ENCODE measurements at regions of chr17 and their contacts with region 1.

Region 1: DNA sequence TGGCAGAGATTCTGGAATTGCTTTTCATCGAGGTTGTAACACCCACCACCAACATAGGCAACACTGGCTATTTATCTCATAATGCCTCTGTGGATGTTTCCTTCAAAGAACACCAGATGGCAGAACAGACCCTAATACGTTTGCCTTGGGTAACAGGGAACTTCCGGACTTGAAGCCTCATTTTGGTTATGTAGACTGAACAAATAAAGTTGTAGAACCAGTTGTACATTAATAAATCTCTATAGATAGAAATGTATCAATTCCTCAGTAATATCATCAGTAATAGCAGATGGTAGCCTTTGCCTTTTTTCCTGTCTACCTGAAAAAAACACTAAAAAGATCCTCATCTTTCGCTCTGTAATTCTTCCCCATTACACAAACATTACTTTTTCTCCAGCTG is 25.9 kb upstream of the APOH start:
- DNase-seq: peak; percentile 64 to 74 (median 70)
- H3K4me3 ChIP-seq: no peak overlapping the region
- H3K4me3 Mint-ChIP-seq: peak overlapping the region; percentile 25 to 81 (median 66)
- H3K27ac ChIP-seq: peak overlapping the region; percentile 10
- H3K27ac Mint-ChIP-seq: peak overlapping the region; percentile 19 to 95 (median 81)
- H3K4me1 ChIP-seq: peaks cover 26% of the 10 kb centered on the region
- H3K4me1 Mint-ChIP-seq: peaks cover 16 to 25% (median 20%) of the 10 kb centered on the region in 4 donors
- H3K27me3 ChIP-seq: no peaks in the 10 kb centered on the region
- H3K27me3 Mint-ChIP-seq: no peaks in the 10 kb centered on the region

Region 2: DNA sequence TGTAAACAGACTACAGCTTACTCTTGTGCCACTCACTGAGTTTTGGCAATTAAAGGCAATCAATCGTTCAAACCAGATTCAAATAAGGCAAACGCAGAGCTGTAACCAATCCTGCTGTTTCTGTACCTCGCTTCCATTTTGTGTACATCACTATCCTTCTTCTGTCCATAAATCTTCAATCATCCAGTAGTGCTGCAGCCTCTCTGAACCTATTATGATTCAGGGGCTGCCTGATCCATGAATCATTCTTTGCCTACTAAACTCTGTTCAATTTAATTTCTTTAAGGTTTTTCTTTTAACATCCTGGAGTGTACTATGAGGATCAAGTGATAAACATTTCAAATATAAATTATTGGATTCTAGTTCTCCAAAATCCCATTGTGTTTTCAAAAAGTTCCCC is 157.1 kb before region 1 on chr17:
- CTCF ChIA-PET with region 1: no interaction called
- POLR2A ChIA-PET with region 1: no interaction called
- intact Hi-C with region 1: no loop called
- DNase-seq: no peak
- H3K4me3 ChIP-seq: no peak overlapping the region
- H3K4me3 Mint-ChIP-seq: no peak overlapping the region
- H3K27ac ChIP-seq: no peak overlapping the region
- H3K27ac Mint-ChIP-seq: no peak overlapping the region
- H3K4me1 ChIP-seq: no peaks in the 10 kb centered on the region
- H3K4me1 Mint-ChIP-seq: no peaks in the 10 kb centered on the region
- H3K27me3 ChIP-seq: no peaks in the 10 kb centered on the region
- H3K27me3 Mint-ChIP-seq: no peaks in the 10 kb centered on the region

Region 3: DNA sequence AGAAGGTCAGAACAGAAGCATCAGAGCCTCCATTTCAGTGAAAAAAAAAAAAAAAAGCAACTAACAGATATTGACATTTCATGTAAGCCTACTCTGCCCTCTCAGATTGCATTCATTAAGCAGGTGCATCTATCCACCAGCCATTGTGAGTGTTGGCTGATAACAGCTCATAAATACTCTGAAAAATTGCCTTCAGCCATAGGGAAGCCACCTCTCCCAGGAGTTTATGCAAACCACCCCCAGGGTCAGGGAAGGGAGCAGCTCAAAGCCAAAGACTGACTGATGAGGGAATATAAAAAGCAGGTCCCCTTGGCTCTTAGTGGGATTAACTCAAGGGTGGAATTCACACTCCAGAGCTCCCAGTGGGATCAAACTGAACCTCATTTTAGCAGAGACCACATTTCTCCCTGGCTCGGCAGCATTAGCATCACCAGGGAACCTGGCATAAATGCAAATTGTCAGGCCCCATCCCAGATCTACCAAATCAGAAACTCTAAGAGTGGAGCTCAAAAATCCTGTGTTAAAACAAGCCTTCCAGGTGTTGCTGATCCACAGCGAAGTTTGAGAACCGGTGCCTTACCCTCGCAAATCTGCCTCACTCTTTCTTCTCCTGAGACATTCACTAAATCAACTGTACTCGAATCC is 40.1 kb before region 1 on chr17:
- CTCF ChIA-PET with region 1: no interaction called
- POLR2A ChIA-PET with region 1: no interaction called
- intact Hi-C with region 1: no loop called
- DNase-seq: no peak
- H3K4me3 ChIP-seq: no peak overlapping the region
- H3K4me3 Mint-ChIP-seq: no peak overlapping the region
- H3K27ac ChIP-seq: no peak overlapping the region
- H3K27ac Mint-ChIP-seq: no peak overlapping the region
- H3K4me1 ChIP-seq: no peaks in the 10 kb centered on the region
- H3K4me1 Mint-ChIP-seq: no peaks in the 10 kb centered on the region
- H3K27me3 ChIP-seq: peaks cover 4% of the 10 kb centered on the region
- H3K27me3 Mint-ChIP-seq: peaks cover 0 to 4% of the 10 kb centered on the region in 2 donors

Region 4: GRCh38 chr17:66287911-66288310 is 32.8 kb after region 1 on chr17:
- CTCF ChIA-PET with region 1: interaction called, 10 read pairs
- POLR2A ChIA-PET with region 1: no interaction called
- intact Hi-C with region 1: no loop called
- DNase-seq: no peak
- H3K4me3 ChIP-seq: no peak overlapping the region
- H3K4me3 Mint-ChIP-seq: peak overlapping the region in 3 of 8 donors; percentile 17 to 30 (median 22)
- H3K27ac ChIP-seq: no peak overlapping the region
- H3K27ac Mint-ChIP-seq: peak overlapping the region in 5 of 7 donors; percentile 23 to 88 (median 41)
- H3K4me1 ChIP-seq: peaks cover 27% of the 10 kb centered on the region
- H3K4me1 Mint-ChIP-seq: peaks cover 26 to 53% (median 39%) of the 10 kb centered on the region in 4 donors
- H3K27me3 ChIP-seq: no peaks in the 10 kb centered on the region
- H3K27me3 Mint-ChIP-seq: no peaks in the 10 kb centered on the region

Region 5: GRCh38 chr17:66426397-66427033 is 171.4 kb after region 1 on chr17:
- CTCF ChIA-PET with region 1: interaction called, 12 read pairs
- POLR2A ChIA-PET with region 1: interaction called, 4 read pairs
- intact Hi-C with region 1: loop called (anchors 1 kb)
- DNase-seq: peak; percentile 59 to 68 (median 62)
- H3K4me3 ChIP-seq: no peak overlapping the region
- H3K4me3 Mint-ChIP-seq: peak overlapping the region; percentile 45 to 86 (median 64)
- H3K27ac ChIP-seq: no peak overlapping the region
- H3K27ac Mint-ChIP-seq: peak overlapping the region; percentile 45 to 91 (median 87)
- H3K4me1 ChIP-seq: peaks cover 17% of the 10 kb centered on the region
- H3K4me1 Mint-ChIP-seq: peaks cover 38 to 83% (median 60%) of the 10 kb centered on the region in 4 donors
- H3K27me3 ChIP-seq: no peaks in the 10 kb centered on the region
- H3K27me3 Mint-ChIP-seq: no peaks in the 10 kb centered on the region

Region 6: GRCh38 chr17:66481271-66481670 is 226.2 kb after region 1 on chr17:
- CTCF ChIA-PET with region 1: no interaction called
- POLR2A ChIA-PET with region 1: no interaction called
- intact Hi-C with region 1: no loop called
- DNase-seq: no peak
- H3K4me3 ChIP-seq: no peak overlapping the region
- H3K4me3 Mint-ChIP-seq: no peak overlapping the region
- H3K27ac ChIP-seq: no peak overlapping the region
- H3K27ac Mint-ChIP-seq: no peak overlapping the region
- H3K4me1 ChIP-seq: no peaks in the 10 kb centered on the region
- H3K4me1 Mint-ChIP-seq: peaks cover 20 to 31% (median 30%) of the 10 kb centered on the region in 4 donors
- H3K27me3 ChIP-seq: no peaks in the 10 kb centered on the region
- H3K27me3 Mint-ChIP-seq: no peaks in the 10 kb centered on the region

Region 7: DNA sequence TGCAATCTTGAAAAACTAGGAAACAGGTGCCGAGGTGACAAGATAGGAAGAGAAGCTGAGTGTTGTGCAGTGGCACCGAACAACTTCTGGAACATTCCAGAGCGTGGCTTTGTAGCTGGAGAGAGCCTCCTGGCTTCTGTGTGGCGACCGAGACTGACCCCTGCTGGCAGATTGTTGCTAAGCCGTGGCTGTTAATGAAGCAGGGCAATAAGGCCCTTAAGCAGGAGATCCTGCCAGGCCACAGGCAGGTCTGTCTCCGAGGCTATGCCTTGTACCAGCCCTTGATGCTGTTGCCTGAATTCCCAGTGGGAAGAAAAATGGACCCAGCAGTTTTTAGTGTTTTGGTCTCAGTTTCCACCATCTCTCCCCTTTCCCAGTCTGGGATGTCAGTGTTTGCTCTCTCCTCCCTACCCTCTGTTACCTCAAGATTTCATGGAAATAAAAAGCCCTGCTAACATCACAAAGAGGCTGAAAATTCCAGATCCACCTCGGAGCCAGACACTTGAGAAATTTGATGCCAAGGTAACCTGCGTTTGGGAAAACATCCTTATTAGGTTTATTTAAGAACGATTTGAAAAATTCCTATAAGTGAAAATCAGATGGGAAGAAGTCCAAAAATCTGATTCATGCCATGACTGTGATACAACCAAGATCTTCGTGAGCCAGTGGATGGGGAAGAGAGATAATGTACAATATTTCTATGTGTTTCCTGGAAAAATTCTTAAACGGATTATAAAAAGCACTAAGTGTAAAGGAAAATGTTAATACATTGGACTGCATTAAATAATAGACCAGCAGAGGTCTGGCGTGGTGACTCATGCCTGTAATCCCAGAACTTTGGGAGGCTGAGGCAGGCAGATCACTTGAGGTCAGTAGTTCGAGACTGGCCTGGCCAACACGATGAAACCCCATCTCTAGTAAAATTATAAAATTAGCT is 312.4 kb after region 1 on chr17:
- CTCF ChIA-PET with region 1: interaction called, 40 read pairs
- POLR2A ChIA-PET with region 1: interaction called, 4 read pairs
- intact Hi-C with region 1: loop called (anchors 1 kb)
- DNase-seq: peak; percentile 60 to 77 (median 62)
- H3K4me3 ChIP-seq: no peak overlapping the region
- H3K4me3 Mint-ChIP-seq: peak overlapping the region in 1 of 8 donors; percentile 21
- H3K27ac ChIP-seq: no peak overlapping the region
- H3K27ac Mint-ChIP-seq: peak overlapping the region in 3 of 7 donors; percentile 8 to 68 (median 9)
- H3K4me1 ChIP-seq: peaks cover 8% of the 10 kb centered on the region
- H3K4me1 Mint-ChIP-seq: peaks cover 21 to 32% (median 26%) of the 10 kb centered on the region in 4 donors
- H3K27me3 ChIP-seq: no peaks in the 10 kb centered on the region
- H3K27me3 Mint-ChIP-seq: no peaks in the 10 kb centered on the region

Region 8: DNA sequence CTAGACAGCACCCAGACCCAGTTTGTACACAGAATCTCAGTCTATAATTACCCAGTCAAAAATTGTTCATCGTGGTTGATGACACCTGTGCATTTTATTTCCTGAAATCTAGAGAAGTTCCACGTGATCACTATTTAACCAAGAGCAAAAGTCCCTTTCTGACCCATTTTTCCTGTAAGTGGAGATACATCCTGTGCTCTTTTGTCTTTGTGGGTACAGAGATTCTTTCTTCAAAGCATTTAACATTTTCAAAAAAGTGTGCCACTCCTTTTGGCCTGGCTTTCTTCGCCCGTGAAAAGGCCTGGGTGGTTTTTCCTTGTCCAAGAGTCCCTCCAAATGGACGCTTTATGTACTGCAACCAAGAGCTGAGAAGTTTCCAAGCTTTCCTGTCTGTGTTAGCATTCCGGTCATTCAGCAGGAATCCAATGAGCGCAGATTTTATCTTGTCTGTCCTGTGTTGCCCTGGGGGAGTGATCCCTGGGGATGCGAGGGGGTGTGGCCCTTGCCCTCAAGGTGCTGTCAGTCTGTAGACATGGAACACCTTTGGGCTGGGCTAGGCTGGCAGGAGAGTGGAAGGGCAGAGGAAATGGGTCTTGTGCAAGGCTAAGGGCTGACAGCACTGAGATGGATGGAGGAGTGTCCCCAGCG is 418.7 kb after region 1 on chr17:
- CTCF ChIA-PET with region 1: interaction called, 6 read pairs
- POLR2A ChIA-PET with region 1: no interaction called
- intact Hi-C with region 1: loop called (anchors 1 kb)
- DNase-seq: peak; percentile 75 to 88 (median 84)
- H3K4me3 ChIP-seq: peak overlapping the region in 1 of 2 donors; percentile 21
- H3K4me3 Mint-ChIP-seq: peak overlapping the region; percentile 42 to 88 (median 74)
- H3K27ac ChIP-seq: peak overlapping the region; percentile 64
- H3K27ac Mint-ChIP-seq: peak overlapping the region; percentile 88 to 97 (median 96)
- H3K4me1 ChIP-seq: peaks cover 43% of the 10 kb centered on the region
- H3K4me1 Mint-ChIP-seq: peaks cover 43 to 79% (median 57%) of the 10 kb centered on the region in 4 donors
- H3K27me3 ChIP-seq: no peaks in the 10 kb centered on the region
- H3K27me3 Mint-ChIP-seq: no peaks in the 10 kb centered on the region

Region 9: GRCh38 chr17:66906321-66907278 is 651.5 kb after region 1 on chr17:
- CTCF ChIA-PET with region 1: interaction called, 3 read pairs
- POLR2A ChIA-PET with region 1: no interaction called
- intact Hi-C with region 1: loop called (anchors 1 kb)
- DNase-seq: peak; percentile 42 to 60 (median 58)
- H3K4me3 ChIP-seq: no peak overlapping the region
- H3K4me3 Mint-ChIP-seq: no peak overlapping the region
- H3K27ac ChIP-seq: no peak overlapping the region
- H3K27ac Mint-ChIP-seq: peak overlapping the region in 1 of 7 donors; percentile 12
- H3K4me1 ChIP-seq: no peaks in the 10 kb centered on the region
- H3K4me1 Mint-ChIP-seq: peaks cover 4 to 6% (median 5%) of the 10 kb centered on the region in 4 donors
- H3K27me3 ChIP-seq: no peaks in the 10 kb centered on the region
- H3K27me3 Mint-ChIP-seq: peaks cover 2 to 9% of the 10 kb centered on the region in 2 donors